ENCODE measurements at regions of chr4 and their contacts with region 1.

Region 1: GRCh38 chr4:153634738-153635353 is 49.2 kb upstream of the TLR2 start:
- DNase-seq: peak in 1 of 35 experiments; percentile 44
- ATAC-seq: peak in 2 of 4 experiments; percentile 41 to 44
- H3K4me3 ChIP-seq: no peak overlapping the region
- H3K4me3 Mint-ChIP-seq: no peak overlapping the region
- H3K27ac ChIP-seq: no peak overlapping the region
- H3K27ac Mint-ChIP-seq: peak overlapping the region in 1 of 2 donors; percentile 34
- H3K4me1 ChIP-seq: no peaks in the 10 kb centered on the region
- H3K4me1 Mint-ChIP-seq: peaks cover 0 to 4% (median 0%) of the 10 kb centered on the region in 3 donors
- H3K27me3 ChIP-seq: no peaks in the 10 kb centered on the region
- H3K27me3 Mint-ChIP-seq: no peaks in the 10 kb centered on the region

Region 2: GRCh38 chr4:153603258-153603657 is 31.6 kb before region 1 on chr4:
- CTCF ChIA-PET with region 1: no interaction called
- POLR2A ChIA-PET with region 1: no interaction called
- DNase-seq: no peak
- ATAC-seq: no peak
- H3K4me3 ChIP-seq: no peak overlapping the region
- H3K4me3 Mint-ChIP-seq: no peak overlapping the region
- H3K27ac ChIP-seq: no peak overlapping the region
- H3K27ac Mint-ChIP-seq: peak overlapping the region in 1 of 2 donors; percentile 11
- H3K4me1 ChIP-seq: no peaks in the 10 kb centered on the region
- H3K4me1 Mint-ChIP-seq: peaks cover 11 to 17% (median 15%) of the 10 kb centered on the region in 3 donors
- H3K27me3 ChIP-seq: no peaks in the 10 kb centered on the region
- H3K27me3 Mint-ChIP-seq: no peaks in the 10 kb centered on the region

Region 3: GRCh38 chr4:153750197-153750817 is 115.5 kb after region 1 on chr4:
- CTCF ChIA-PET with region 1: interaction called, 3 to 12 read pairs
- POLR2A ChIA-PET with region 1: interaction called in 1 of 2 experiments, 4 read pairs
- DNase-seq: peak in 34 of 35 experiments; percentile 21 to 76 (median 45)
- ATAC-seq: peak; percentile 58 to 75 (median 70)
- H3K4me3 ChIP-seq: no peak overlapping the region
- H3K4me3 Mint-ChIP-seq: no peak overlapping the region
- H3K27ac ChIP-seq: no peak overlapping the region
- H3K27ac Mint-ChIP-seq: no peak overlapping the region
- H3K4me1 ChIP-seq: peaks cover 7 to 8% of the 10 kb centered on the region in 2 experiments
- H3K4me1 Mint-ChIP-seq: peaks cover 10 to 12% (median 10%) of the 10 kb centered on the region in 3 donors
- H3K27me3 ChIP-seq: no peaks in the 10 kb centered on the region
- H3K27me3 Mint-ChIP-seq: peaks cover 0 to 5% of the 10 kb centered on the region in 2 donors

Measured in T-cell (primary cell).